A673 (cell line): ENCODE measurements at regions of chrX and their contacts with region 1.

Region 1: GRCh38 chrX:77937271-77937670 is 26.8 kb downstream of the ATP7A start:
- DNase-seq: no peak
- H3K4me3 ChIP-seq: no peak overlapping the region
- H3K27ac ChIP-seq: no peak overlapping the region
- H3K4me1 ChIP-seq: peaks cover 3% of the 10 kb centered on the region
- H3K27me3 ChIP-seq: no peaks in the 10 kb centered on the region
- CTCF ChIP-seq: no peak

Region 2: DNA sequence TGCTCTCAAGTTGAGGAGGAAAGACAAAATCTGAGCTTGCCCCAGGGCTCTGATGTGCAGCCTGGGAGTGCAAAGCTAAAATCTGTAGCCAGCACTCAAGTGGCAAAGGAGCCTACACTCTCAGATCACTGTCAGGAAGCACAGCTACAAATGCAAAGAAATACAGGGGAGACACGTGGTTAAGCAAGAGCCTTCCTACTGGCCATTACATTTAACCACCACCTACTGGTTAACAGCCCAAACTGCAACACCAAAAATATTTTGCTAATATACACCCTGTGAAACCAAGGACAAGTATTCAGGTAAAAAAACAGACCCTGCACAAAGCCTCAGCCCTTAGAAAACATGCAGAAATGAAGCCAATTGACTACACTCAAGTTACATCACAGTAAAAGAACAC is 660.5 kb before region 1 on chrX:
- CTCF ChIA-PET with region 1: no interaction called
- POLR2A ChIA-PET with region 1: no interaction called
- intact Hi-C with region 1: no loop called
- DNase-seq: no peak
- H3K4me3 ChIP-seq: no peak overlapping the region
- H3K27ac ChIP-seq: no peak overlapping the region
- H3K4me1 ChIP-seq: no peaks in the 10 kb centered on the region
- H3K27me3 ChIP-seq: no peaks in the 10 kb centered on the region
- CTCF ChIP-seq: no peak

Region 3: DNA sequence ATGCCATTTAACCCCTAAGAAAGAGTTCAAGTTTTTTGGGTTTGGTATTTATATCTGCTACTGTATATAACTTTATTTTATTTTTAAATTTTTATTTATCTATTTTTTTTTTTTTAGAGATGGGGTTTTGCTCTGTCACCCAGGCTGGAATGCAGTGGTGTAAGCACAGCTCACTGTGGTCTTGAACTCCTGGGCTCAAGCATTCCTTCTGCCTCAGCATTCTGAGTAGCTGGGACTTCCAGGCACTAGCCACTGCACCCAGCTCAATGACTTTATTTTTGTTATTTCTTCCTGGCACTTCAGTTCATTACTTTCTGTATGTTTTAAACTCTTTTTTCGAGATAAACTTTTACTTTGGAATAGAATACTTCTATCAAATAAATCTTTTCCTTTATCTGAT is 74.6 kb after region 1 on chrX:
- CTCF ChIA-PET with region 1: no interaction called
- POLR2A ChIA-PET with region 1: interaction called, 12 read pairs
- intact Hi-C with region 1: no loop called
- DNase-seq: no peak
- H3K4me3 ChIP-seq: no peak overlapping the region
- H3K27ac ChIP-seq: no peak overlapping the region
- H3K4me1 ChIP-seq: no peaks in the 10 kb centered on the region
- H3K27me3 ChIP-seq: no peaks in the 10 kb centered on the region
- CTCF ChIP-seq: no peak